ENCODE measurements at regions of chr5 and their contacts with region 1.

Region 1: DNA sequence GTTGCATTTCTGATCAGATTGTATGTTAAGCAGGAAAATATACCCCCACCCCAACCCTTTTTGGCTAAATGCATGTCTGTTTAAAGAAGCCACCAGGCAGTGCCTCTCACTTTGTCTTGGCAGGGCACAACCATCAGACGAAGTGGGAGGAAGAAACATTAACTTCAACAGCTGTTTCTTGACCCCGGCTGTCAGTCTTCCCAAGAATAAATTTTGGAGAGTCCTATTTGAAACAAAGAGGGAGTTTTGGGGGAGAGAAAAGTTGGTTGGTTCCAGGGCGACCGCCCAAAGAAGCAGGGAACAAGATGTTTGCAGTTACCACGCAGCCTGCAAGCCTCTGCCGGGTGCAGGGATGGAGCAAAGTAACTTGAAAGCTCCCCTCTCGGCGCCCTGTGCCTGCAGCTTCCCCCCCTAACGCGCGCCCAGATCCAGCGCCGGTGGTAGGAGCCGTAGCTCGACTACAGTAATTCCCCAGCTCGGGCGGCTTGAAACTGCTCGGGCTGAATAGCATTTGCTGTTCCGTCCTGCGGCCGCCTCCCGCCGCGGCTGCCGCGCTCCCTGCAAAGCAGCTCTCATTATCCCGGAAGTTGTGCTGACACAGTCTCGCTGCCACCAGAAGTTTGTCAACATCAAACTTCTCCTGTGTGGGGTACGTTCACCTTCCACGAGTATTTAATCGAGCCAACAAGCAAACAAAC is 100.7 kb upstream of the SSBP2 start:
- DNase-seq: peak; percentile 97
- ATAC-seq: peak; percentile 98
- H3K4me3 ChIP-seq: peak overlapping the region; percentile 52
- H3K27ac ChIP-seq: peak overlapping the region; percentile 95
- H3K4me1 ChIP-seq: peaks cover 15% of the 10 kb centered on the region
- H3K27me3 ChIP-seq: no peaks in the 10 kb centered on the region
- CTCF ChIP-seq: no peak

Region 2: DNA sequence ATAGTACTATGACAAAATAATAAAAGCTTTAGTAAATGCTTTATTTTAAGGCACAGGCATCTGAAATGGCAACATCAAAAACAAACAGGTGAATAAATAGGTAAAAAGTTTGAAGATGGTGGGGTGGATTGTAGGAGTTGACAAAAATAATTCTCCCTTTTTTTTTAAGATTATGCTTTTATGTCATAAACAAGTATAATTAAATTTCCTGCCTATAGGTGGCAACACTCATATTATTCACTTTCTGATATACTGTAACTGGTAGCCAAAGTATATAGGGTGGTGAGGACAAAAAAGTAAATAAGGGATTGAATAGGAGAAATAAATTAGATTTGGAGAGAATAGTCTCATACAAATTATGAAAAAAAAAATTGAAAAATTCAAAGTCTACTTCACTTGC is 337.6 kb before region 1 on chr5:
- intact Hi-C with region 1: loop called (anchors 10 kb)
- DNase-seq: no peak
- ATAC-seq: no peak
- H3K4me3 ChIP-seq: no peak overlapping the region
- H3K27ac ChIP-seq: no peak overlapping the region
- H3K4me1 ChIP-seq: no peaks in the 10 kb centered on the region
- H3K27me3 ChIP-seq: no peaks in the 10 kb centered on the region
- CTCF ChIP-seq: no peak

Region 3: GRCh38 chr5:81751009-81751835 is 100.4 kb before region 1 on chr5 and contains the start of gene SSBP2:
- intact Hi-C with region 1: loop called (anchors 10 kb)
- DNase-seq: peak; percentile 99
- ATAC-seq: peak; percentile 94
- H3K4me3 ChIP-seq: peak within 1 kb of the TSS; percentile 73
- H3K27ac ChIP-seq: peak within 1 kb of the TSS; percentile 99
- H3K4me1 ChIP-seq: peaks cover 26% of the 10 kb centered on the region
- H3K27me3 ChIP-seq: no peaks in the 10 kb centered on the region
- CTCF ChIP-seq: no peak
- total RNA-seq, gene SSBP2: 43.8 TPM

Region 4: GRCh38 chr5:81787474-81788242 is 64.0 kb before region 1 on chr5:
- intact Hi-C with region 1: loop called (anchors 5 kb)
- DNase-seq: no peak
- ATAC-seq: peak; percentile 59
- H3K4me3 ChIP-seq: no peak overlapping the region
- H3K27ac ChIP-seq: no peak overlapping the region
- H3K4me1 ChIP-seq: peaks cover 12% of the 10 kb centered on the region
- H3K27me3 ChIP-seq: no peaks in the 10 kb centered on the region
- CTCF ChIP-seq: no peak

Region 5: DNA sequence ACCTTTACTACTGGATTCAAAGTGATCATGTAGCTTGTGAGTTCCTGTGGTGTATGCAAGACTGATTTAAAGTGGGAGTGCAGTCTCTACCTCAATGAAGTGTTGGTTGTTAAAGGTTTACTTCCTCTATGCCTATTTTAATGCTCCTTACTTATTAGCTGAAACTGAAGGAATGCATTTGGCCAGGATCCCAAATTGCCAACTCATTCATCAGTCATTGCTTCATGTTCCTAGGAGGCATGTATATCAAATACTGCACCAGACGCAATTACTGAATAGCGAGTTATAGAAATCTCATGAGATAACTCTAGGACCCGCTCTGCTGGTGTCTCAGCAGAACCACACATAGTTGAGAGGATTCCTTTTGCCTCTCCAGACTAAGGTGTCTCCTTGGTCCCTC is 569.5 kb after region 1 on chr5:
- intact Hi-C with region 1: no loop called
- DNase-seq: no peak
- ATAC-seq: peak; percentile 39
- H3K4me3 ChIP-seq: no peak overlapping the region
- H3K27ac ChIP-seq: no peak overlapping the region
- H3K4me1 ChIP-seq: peaks cover 10% of the 10 kb centered on the region
- H3K27me3 ChIP-seq: no peaks in the 10 kb centered on the region
- CTCF ChIP-seq: no peak

Region 6: DNA sequence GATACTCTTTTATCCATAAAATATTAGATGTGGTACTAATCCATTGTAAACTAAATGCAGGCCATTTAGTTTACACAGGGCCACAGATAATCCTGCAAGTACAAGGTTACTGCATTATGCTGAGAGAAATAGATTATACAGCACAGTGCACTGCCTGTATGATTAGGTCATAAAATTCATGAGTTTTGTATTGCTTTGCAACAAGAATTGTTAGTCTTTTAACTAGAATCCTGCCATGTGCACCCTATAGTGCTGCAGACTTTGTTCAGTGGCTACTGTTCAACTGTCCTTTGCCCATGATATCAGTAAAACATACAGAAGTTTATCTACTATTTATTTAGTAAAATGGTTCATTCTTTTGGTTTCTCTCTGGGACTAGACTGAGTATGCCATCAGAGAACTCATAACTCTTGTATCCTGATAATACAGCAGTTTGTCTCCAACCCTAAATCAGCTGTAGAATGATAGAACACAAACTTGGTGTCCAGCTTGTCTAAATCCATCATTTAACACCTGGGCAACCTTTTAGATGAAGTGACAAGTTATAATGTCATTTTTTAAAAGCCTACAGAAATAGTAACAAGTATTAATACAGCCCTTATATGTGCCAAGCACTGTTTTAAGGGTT is 934.4 kb after region 1 on chr5:
- intact Hi-C with region 1: no loop called
- DNase-seq: no peak
- ATAC-seq: no peak
- H3K4me3 ChIP-seq: no peak overlapping the region
- H3K27ac ChIP-seq: no peak overlapping the region
- H3K4me1 ChIP-seq: no peaks in the 10 kb centered on the region
- H3K27me3 ChIP-seq: no peaks in the 10 kb centered on the region
- CTCF ChIP-seq: no peak